Astrocyte of the cerebellum (primary cell): ENCODE measurements at regions of chr6 and their contacts with region 1.

Region 1: DNA sequence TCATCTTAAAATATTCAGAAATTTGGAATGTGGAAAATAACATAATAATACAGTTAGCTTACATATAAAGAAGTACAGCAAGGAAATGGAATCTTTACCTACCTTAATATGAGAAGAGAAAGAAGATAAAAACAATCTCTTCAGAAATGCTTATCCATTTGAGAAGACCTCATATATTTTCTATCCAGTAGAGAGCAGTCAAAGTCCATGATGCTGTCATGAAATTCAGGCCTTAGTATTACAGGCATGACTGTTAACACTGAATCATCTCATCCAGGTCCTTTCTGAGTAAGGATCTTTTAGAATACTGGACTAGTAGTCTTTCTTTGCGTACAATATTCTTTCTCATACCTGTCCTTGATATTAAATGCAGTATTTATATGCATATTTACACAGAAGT is 713.4 kb downstream of the CD109 start:
- DNase-seq: peak; percentile 67
- H3K4me3 ChIP-seq: no peak overlapping the region
- CTCF ChIP-seq: peak; percentile 47

Region 2: DNA sequence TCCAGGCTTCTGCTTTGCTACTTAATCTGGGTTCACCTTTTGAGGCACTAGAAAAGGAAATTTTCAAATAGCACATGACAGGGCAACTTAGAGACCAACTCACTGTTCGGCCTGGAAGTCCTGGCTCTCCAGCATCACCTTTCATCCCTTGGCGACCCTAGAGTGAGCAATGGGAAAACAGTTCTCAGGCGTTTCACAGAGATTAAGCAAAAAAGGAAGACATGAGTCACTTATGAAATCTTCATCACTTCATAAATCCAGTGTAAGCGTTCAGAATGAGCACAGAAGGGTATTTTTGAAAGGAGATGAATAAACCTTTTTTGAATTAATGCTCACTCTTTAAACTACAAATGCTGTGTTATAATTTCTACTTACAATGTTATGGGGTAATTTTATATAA is 692.4 kb after region 1 on chr6:
- in situ Hi-C with region 1: loop called (anchors 25 kb)
- DNase-seq: no peak
- H3K4me3 ChIP-seq: no peak overlapping the region
- CTCF ChIP-seq: no peak